Left cardiac atrium (tissue), 4 donors: ENCODE measurements at regions of chr6 and their contacts with region 1.

Region 1: GRCh38 chr6:39302669-39303424 is 11.4 kb downstream of the KCNK17 start:
- DNase-seq: peak; percentile 89
- ATAC-seq: peak; percentile 90 to 92

Region 2: DNA sequence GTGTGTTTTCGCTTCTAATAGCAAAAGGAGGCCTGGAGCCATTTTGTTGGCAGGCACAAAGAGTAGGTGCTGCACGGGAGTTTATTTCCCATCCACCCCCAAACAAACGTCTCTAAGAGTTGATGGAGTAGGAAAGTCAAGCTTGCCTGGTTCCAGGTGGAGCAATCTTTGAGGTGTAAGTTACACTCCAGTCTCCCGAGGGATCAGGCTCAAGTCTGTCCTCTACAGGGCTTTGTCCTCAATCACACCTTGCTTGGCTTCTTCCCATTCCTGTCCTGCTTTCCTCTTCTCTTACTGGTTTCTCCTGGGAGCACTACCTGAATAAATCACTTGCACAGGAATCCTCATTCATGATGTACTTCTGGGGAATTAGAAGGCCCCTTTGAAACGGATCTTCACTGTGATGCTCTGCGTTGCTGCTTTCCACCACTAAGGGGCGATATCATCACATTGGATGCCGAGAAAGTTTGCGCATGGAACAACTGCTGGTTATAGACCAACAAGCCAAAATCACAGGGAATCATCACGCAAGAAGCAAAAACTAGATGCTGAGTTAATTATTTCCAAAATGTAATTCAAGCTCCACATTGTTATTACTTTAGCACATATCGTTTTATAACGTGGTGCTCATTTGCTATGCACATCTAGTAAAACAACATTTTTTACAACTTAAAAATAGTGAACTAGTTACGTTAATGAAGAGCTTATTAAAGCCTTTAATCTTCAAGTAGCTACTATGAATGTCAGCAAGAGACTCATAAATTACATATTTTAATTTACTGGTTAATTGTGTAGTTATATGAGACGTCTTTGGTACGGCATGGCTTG is 430.9 kb before region 1 on chr6:
- intact Hi-C with region 1: loop called in 1 of 2 experiments (anchors 10 kb)
- DNase-seq: peak; percentile 32
- ATAC-seq: peak in 1 of 2 donors; percentile 52

Region 3: DNA sequence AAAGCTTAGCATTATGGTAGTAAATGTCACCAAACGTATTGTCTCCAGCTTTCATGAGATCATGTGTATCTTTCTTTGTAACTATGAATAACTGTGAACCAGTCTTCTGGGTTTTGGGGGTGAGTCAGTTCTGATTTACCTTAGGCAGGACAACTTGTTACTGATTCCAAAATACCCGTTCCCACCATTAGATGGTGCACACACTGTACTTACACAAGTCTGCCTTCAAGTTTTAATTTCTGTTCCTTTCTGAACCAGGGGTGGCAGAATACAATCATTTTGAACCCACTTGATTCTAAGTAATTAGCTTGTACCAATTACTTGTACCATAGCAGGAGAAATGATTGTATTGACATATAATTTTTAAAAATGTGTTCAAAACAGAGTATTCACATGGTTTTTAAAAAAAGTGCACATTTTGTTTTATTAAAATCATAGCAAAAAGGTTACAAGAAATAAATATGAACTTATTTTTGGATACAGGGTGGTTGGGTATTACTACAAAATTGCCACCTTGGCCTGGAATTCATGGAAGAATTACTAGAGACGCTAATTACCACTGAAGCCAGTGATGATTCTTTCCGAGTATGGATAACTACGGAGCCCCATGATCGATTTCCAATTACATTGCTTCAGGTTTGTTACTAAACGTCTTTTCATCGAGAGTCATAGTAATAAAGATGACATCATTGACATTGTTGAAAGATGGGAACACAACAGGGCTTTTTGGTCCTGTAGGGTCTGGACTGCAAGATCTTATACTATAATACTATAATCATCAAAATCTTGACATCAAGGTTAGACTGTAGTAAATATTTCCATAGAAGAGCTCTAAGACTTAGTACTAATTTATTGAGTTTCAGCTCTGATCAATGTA is 329.4 kb before region 1 on chr6:
- intact Hi-C with region 1: loop called (anchors 2 to 10 kb)
- DNase-seq: no peak
- ATAC-seq: peak; percentile 31 to 77

Region 4: GRCh38 chr6:39088331-39088730 is 214.5 kb before region 1 on chr6:
- intact Hi-C with region 1: loop called in 1 of 2 experiments (anchors 10 kb)
- DNase-seq: peak; percentile 39
- ATAC-seq: peak; percentile 65 to 84

Region 5: GRCh38 chr6:39166189-39166911 is 136.5 kb before region 1 on chr6:
- intact Hi-C with region 1: loop called (anchors 1 to 2 kb)
- DNase-seq: peak; percentile 79
- ATAC-seq: peak; percentile 84 to 85